ENCODE measurements at regions of chr14 and their contacts with region 1.

Region 1: GRCh38 chr14:105480952-105481801 is 5.5 kb upstream of the CRIP1 start:
- DNase-seq: no peak
- H3K4me3 ChIP-seq: peak overlapping the region; percentile 42
- H3K27me3 ChIP-seq: 0 out of 2 replicates have a peak, but pooled peaks cover 1% of the 10 kb centered on the region
- CTCF ChIP-seq: peak; percentile 99

Region 2: DNA sequence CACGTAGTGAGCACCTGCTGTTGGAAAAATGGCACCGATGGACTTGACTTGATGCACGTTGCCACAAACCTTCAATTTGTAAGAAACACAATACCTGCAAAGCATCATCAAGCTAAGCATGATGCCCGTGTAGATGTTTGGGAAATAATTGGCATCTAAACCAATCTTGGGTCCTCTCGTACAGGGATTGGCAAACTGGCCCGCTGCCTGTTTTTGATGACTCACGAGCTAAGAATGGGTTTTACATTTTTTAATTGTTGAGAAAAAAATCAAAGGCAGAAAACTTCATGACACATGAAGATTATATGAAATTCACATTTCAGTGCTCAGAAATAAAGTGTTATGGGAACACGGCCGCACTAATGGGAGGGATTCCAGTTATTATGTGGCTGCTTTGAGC is 50.6 kb before region 1 on chr14:
- CTCF ChIA-PET with region 1: interaction called, 12 read pairs
- POLR2A ChIA-PET with region 1: no interaction called
- DNase-seq: no peak
- H3K4me3 ChIP-seq: no peak overlapping the region
- H3K27me3 ChIP-seq: no peaks in the 10 kb centered on the region
- CTCF ChIP-seq: no peak

Region 3: GRCh38 chr14:105468603-105469241 is 12.5 kb before region 1 on chr14:
- CTCF ChIA-PET with region 1: interaction called, 31 read pairs
- POLR2A ChIA-PET with region 1: no interaction called
- DNase-seq: no peak
- H3K4me3 ChIP-seq: no peak overlapping the region
- H3K27me3 ChIP-seq: no peaks in the 10 kb centered on the region
- CTCF ChIP-seq: no peak

Region 4: GRCh38 chr14:105527661-105528581 is 46.7 kb after region 1 on chr14:
- CTCF ChIA-PET with region 1: interaction called, 19 read pairs
- POLR2A ChIA-PET with region 1: no interaction called
- DNase-seq: no peak
- H3K4me3 ChIP-seq: peak overlapping the region; percentile 76
- H3K27me3 ChIP-seq: no peaks in the 10 kb centered on the region
- CTCF ChIP-seq: peak; percentile 67